Activated naive CD4-positive, alpha-beta T cell treated with anti-CD3 and anti-CD28 coated beads for 36 hours (primary cell): ENCODE measurements at regions of chr1 and their contacts with region 1.

Region 1: DNA sequence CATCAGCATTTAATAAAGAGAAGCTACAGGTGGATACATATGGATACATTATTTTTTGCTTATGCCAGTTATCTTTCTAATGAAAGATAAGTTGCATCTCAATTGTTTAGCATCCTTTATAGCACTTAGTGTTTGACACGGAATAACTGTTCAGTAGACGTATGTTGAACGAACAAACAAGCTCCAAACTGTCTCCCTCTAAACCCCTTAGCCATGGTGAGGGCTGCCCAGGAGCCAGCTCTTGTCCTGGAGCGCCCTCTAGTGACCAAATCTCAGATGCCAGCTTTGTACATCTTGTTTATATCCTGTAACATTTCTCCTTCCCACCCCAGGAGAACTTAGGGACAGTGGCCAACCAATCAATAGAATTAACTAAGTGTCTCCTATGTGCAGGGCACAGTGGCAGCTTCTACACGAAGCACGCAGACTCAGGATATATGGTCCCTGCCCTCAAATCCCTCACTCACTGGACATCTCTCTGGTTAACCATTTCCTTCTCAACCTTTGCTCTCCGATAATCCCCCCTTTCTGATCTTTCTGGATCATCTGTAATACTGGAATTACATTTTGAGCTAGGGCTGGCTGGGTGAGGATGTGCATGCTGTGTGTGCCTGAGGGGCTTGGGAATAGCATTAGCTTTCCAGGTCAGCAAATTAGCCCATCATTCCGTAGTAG is 22.9 kb downstream of the KCNA10 start:
- DNase-seq: peak; percentile 91
- H3K4me3 Mint-ChIP-seq: no peak overlapping the region
- H3K27ac Mint-ChIP-seq: peak overlapping the region; percentile 1
- H3K4me1 Mint-ChIP-seq: no peaks in the 10 kb centered on the region
- H3K27me3 Mint-ChIP-seq: no peaks in the 10 kb centered on the region

Region 2: GRCh38 chr1:110190282-110190929 is 305.7 kb before region 1 on chr1:
- CTCF ChIA-PET with region 1: interaction called, 13 read pairs
- intact Hi-C with region 1: no loop called
- DNase-seq: no peak
- H3K4me3 Mint-ChIP-seq: no peak overlapping the region
- H3K27ac Mint-ChIP-seq: no peak overlapping the region
- H3K4me1 Mint-ChIP-seq: peaks cover 4% of the 10 kb centered on the region
- H3K27me3 Mint-ChIP-seq: no peaks in the 10 kb centered on the region

Region 3: GRCh38 chr1:110203021-110203661 is 292.9 kb before region 1 on chr1:
- CTCF ChIA-PET with region 1: interaction called, 71 read pairs
- intact Hi-C with region 1: loop called (anchors 1 kb)
- DNase-seq: peak; percentile 88
- H3K4me3 Mint-ChIP-seq: no peak overlapping the region
- H3K27ac Mint-ChIP-seq: peak overlapping the region; percentile 81
- H3K4me1 Mint-ChIP-seq: peaks cover 21% of the 10 kb centered on the region
- H3K27me3 Mint-ChIP-seq: no peaks in the 10 kb centered on the region

Region 4: DNA sequence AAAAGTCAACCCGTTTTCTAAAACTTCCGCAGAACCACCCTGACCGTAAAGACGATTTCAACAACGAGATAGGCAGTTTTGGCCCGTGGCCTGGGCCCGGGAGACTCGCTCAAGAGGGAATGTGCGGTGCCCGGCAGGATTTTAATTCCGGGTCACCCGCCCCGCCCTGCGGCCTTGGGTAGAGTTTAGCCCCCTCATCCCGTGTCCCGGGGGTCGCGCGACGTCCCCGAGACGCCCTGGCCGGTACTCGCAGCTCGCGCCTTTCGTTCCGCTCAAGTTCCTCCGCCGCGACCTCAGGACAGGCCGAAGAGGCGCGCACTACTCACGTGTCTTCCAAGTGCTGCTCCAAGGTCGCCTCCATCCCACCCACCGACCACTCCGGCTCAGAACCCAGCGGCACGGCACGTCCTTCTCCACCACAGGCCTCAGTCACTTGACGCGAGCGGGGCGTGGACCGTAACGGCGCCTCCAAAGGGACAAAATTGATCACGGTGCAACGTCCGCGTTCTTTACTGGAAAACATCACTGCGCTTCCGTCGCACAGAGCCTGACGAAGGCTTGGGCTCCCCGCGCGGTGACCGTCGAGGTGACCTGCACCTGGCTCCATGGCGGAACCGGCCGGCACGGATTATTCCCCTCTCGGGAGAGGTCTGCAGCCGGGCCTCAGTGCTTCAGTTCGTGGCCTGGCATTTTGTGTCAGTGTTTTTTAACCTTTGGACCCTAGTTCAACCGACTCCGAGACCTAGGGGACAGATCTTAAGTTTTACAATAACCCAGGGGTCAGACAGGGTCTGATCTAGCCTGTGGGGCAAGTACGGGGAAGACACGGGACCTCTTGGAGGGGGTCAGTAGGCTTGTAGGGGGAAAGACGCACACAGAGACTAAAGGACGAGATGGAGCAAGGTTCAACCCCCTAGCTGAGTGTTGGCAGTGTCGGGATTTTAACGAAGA is 88.5 kb before region 1 on chr1 and contains the start of gene LAMTOR5:
- CTCF ChIA-PET with region 1: interaction called, 46 read pairs
- intact Hi-C with region 1: loop called (anchors 1 kb)
- DNase-seq: peak; percentile 96
- H3K4me3 Mint-ChIP-seq: peak within 1 kb of the TSS; percentile 99
- H3K27ac Mint-ChIP-seq: peak within 1 kb of the TSS; percentile 96
- H3K4me1 Mint-ChIP-seq: peaks cover 15% of the 10 kb centered on the region
- H3K27me3 Mint-ChIP-seq: no peaks in the 10 kb centered on the region
- total RNA-seq, gene LAMTOR5: 138 to 144 TPM

Region 5: GRCh38 chr1:110455151-110455550 is 40.9 kb before region 1 on chr1:
- CTCF ChIA-PET with region 1: interaction called, 76 read pairs
- intact Hi-C with region 1: no loop called
- DNase-seq: no peak
- H3K4me3 Mint-ChIP-seq: no peak overlapping the region
- H3K27ac Mint-ChIP-seq: no peak overlapping the region
- H3K4me1 Mint-ChIP-seq: no peaks in the 10 kb centered on the region
- H3K27me3 Mint-ChIP-seq: no peaks in the 10 kb centered on the region

Region 6: DNA sequence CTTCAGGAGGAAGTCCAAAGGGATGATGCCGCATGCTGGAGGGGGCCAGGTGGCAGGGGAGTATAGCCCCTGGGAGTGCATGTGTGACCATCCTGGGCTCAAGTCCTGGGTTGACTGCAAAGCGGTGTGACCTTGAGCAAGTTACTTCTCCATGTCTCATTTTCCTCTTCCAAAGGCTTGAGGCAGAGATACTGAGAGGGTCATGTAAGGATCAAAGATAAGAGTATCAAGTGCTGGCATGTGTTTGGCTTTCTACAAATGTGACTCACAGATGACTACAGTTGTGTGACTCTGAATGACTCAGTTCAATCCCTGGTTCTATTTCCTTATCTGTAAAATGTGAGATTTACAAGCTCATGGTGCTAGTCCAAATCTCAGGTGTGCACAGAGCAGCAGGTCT is 19.0 kb before region 1 on chr1:
- CTCF ChIA-PET with region 1: interaction called, 38 read pairs
- intact Hi-C with region 1: no loop called
- DNase-seq: no peak
- H3K4me3 Mint-ChIP-seq: no peak overlapping the region
- H3K27ac Mint-ChIP-seq: no peak overlapping the region
- H3K4me1 Mint-ChIP-seq: peaks cover 10% of the 10 kb centered on the region
- H3K27me3 Mint-ChIP-seq: peaks cover 3% of the 10 kb centered on the region

Region 7: GRCh38 chr1:110718452-110718851 is 222.4 kb after region 1 on chr1:
- CTCF ChIA-PET with region 1: no interaction called
- intact Hi-C with region 1: no loop called
- DNase-seq: no peak
- H3K4me3 Mint-ChIP-seq: no peak overlapping the region
- H3K27ac Mint-ChIP-seq: no peak overlapping the region
- H3K4me1 Mint-ChIP-seq: no peaks in the 10 kb centered on the region
- H3K27me3 Mint-ChIP-seq: no peaks in the 10 kb centered on the region

Region 8: GRCh38 chr1:110879758-110880606 is 383.9 kb after region 1 on chr1:
- CTCF ChIA-PET with region 1: no interaction called
- intact Hi-C with region 1: no loop called
- DNase-seq: peak; percentile 88
- H3K4me3 Mint-ChIP-seq: peak overlapping the region; percentile 58
- H3K27ac Mint-ChIP-seq: peak overlapping the region; percentile 99
- H3K4me1 Mint-ChIP-seq: peaks cover 69% of the 10 kb centered on the region
- H3K27me3 Mint-ChIP-seq: no peaks in the 10 kb centered on the region

Region 9: GRCh38 chr1:110927484-110928075 is 431.5 kb after region 1 on chr1:
- CTCF ChIA-PET with region 1: no interaction called
- intact Hi-C with region 1: no loop called
- DNase-seq: no peak
- H3K4me3 Mint-ChIP-seq: no peak overlapping the region
- H3K27ac Mint-ChIP-seq: no peak overlapping the region
- H3K4me1 Mint-ChIP-seq: no peaks in the 10 kb centered on the region
- H3K27me3 Mint-ChIP-seq: no peaks in the 10 kb centered on the region